Spleen (tissue), 13 donors: ENCODE measurements at regions of chr3 and their contacts with region 1.

Region 1: GRCh38 chr3:159616212-159616825 is 372.3 kb upstream of the IL12A start:
- DNase-seq: no peak
- H3K4me3 ChIP-seq: no peak overlapping the region
- H3K27ac ChIP-seq: no peak overlapping the region
- H3K4me1 ChIP-seq: no peaks in the 10 kb centered on the region
- H3K27me3 ChIP-seq: no peaks in the 10 kb centered on the region
- CTCF ChIP-seq: peak in 10 of 11 experiments; percentile 20 to 67 (median 50)
- POLR2A ChIP-seq: no peak

Region 2: GRCh38 chr3:159804726-159805410 is 188.5 kb after region 1 on chr3:
- intact Hi-C with region 1: loop called (anchors 5 kb)
- DNase-seq: no peak
- H3K4me3 ChIP-seq: no peak overlapping the region
- H3K27ac ChIP-seq: peak overlapping the region in 4 of 8 donors; percentile 39 to 55 (median 51)
- H3K4me1 ChIP-seq: peaks cover 0 to 10% (median 0%) of the 10 kb centered on the region in 6 donors
- H3K27me3 ChIP-seq: no peaks in the 10 kb centered on the region
- CTCF ChIP-seq: peak in 10 of 11 experiments; percentile 27 to 81 (median 66)
- POLR2A ChIP-seq: no peak

Region 3: DNA sequence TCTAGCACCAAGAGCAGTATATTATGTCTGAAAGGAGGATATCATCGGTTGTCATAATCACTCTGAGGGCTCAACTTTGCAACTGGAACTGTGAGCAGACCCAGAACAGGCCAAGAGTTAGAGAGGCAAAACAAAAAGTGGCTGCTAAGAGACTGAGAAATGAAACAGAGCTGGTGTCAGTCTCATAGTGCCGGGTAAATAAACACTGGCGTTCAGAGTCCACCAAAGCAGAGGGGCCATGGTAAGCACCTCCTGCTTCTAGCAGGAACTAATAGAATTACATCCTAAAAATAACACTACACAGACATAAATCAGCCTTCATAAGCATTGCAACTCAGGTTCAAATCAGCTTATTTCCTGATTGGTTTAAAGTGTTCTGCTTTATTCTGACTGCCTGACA is 362.0 kb after region 1 on chr3:
- intact Hi-C with region 1: no loop called
- DNase-seq: no peak
- H3K4me3 ChIP-seq: no peak overlapping the region
- H3K27ac ChIP-seq: no peak overlapping the region
- H3K4me1 ChIP-seq: no peaks in the 10 kb centered on the region
- H3K27me3 ChIP-seq: peaks cover 0 to 5% (median 0%) of the 10 kb centered on the region in 7 donors
- CTCF ChIP-seq: no peak
- POLR2A ChIP-seq: no peak